ENCODE measurements at regions of chr2 and their contacts with region 1.

Region 1: GRCh38 chr2:120680136-120680761 is 55.4 kb upstream of the GLI2 start:
- DNase-seq: peak; percentile 70 to 78
- H3K4me3 ChIP-seq: no peak overlapping the region
- H3K27ac ChIP-seq: no peak overlapping the region
- H3K4me1 ChIP-seq: no peaks in the 10 kb centered on the region
- H3K27me3 ChIP-seq: 0 out of 2 replicates have a peak, but pooled peaks cover 6% of the 10 kb centered on the region
- CTCF ChIP-seq: peak; percentile 87

Region 2: GRCh38 chr2:119641562-119642258 is 1038.5 kb before region 1 on chr2:
- CTCF ChIA-PET with region 1: interaction called, 7 read pairs
- POLR2A ChIA-PET with region 1: no interaction called
- intact Hi-C with region 1: loop called (anchors 2 kb)
- DNase-seq: peak; percentile 56 to 72
- H3K4me3 ChIP-seq: no peak overlapping the region
- H3K27ac ChIP-seq: no peak overlapping the region
- H3K4me1 ChIP-seq: peaks cover 10% of the 10 kb centered on the region
- H3K27me3 ChIP-seq: peaks cover 8% of the 10 kb centered on the region; the same call in 1 of the 2 replicates
- CTCF ChIP-seq: peak; percentile 95

Region 3: GRCh38 chr2:120109186-120110061 is 570.8 kb before region 1 on chr2:
- CTCF ChIA-PET with region 1: no interaction called
- POLR2A ChIA-PET with region 1: no interaction called
- intact Hi-C with region 1: loop called (anchors 2 kb)
- DNase-seq: peak in 1 of 2 experiments; percentile 54
- H3K4me3 ChIP-seq: no peak overlapping the region
- H3K27ac ChIP-seq: no peak overlapping the region
- H3K4me1 ChIP-seq: peaks cover 32% of the 10 kb centered on the region
- H3K27me3 ChIP-seq: no peaks in the 10 kb centered on the region
- CTCF ChIP-seq: peak; percentile 73

Region 4: GRCh38 chr2:120312861-120313694 is 367.2 kb before region 1 on chr2:
- CTCF ChIA-PET with region 1: interaction called, 9 read pairs
- POLR2A ChIA-PET with region 1: no interaction called
- intact Hi-C with region 1: loop called (anchors 1 kb)
- DNase-seq: peak; percentile 77 to 90
- H3K4me3 ChIP-seq: no peak overlapping the region
- H3K27ac ChIP-seq: no peak overlapping the region
- H3K4me1 ChIP-seq: no peaks in the 10 kb centered on the region
- H3K27me3 ChIP-seq: no peaks in the 10 kb centered on the region
- CTCF ChIP-seq: peak; percentile 98

Region 5: DNA sequence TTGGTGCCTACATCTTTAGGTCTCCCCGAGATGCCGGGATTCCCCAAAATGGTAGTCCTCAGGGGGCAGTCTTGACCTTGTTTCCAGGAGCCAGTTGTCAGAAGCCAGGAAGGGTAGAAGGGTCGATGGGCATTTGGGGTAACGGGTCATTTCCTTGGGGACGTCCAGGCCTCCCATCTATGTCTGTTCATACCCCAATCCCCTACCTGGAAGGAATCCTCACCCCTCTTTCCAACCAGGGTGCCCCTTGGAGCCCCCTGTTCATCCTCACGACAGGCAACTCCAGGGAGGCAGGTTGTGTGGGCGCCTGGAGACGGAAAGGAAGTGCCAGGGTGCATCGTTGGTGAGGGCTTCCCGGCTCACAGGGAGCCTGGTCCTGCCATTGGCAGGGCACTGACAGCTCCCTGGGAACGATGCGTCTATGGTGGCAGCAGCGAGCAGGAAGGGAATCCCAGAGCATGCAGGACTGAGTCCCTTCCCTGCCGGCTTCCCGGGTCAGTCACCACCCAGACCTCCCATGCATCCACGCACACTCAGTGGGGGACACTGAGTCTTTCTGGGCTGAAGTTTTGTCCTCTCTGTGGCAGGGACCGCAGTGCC is 216.8 kb before region 1 on chr2:
- CTCF ChIA-PET with region 1: no interaction called
- POLR2A ChIA-PET with region 1: no interaction called
- intact Hi-C with region 1: loop called (anchors 5 kb)
- DNase-seq: no peak
- H3K4me3 ChIP-seq: no peak overlapping the region
- H3K27ac ChIP-seq: no peak overlapping the region
- H3K4me1 ChIP-seq: no peaks in the 10 kb centered on the region
- H3K27me3 ChIP-seq: no peaks in the 10 kb centered on the region
- CTCF ChIP-seq: no peak

Measured in PC-9 (cell line).